Prostate gland (tissue), 2 donors: ENCODE measurements at regions of chr10 and their contacts with region 1.

Region 1: GRCh38 chr10:102583435-102584417 is 60.6 kb upstream of the TRIM8 start:
- DNase-seq: peak; percentile 82
- H3K4me3 ChIP-seq: no peak overlapping the region
- H3K27ac ChIP-seq: no peak overlapping the region
- H3K4me1 ChIP-seq: peaks cover 10% of the 10 kb centered on the region
- H3K27me3 ChIP-seq: no peaks in the 10 kb centered on the region
- CTCF ChIP-seq: peak; percentile 59 to 88 (median 84)
- POLR2A ChIP-seq: no peak

Region 2: DNA sequence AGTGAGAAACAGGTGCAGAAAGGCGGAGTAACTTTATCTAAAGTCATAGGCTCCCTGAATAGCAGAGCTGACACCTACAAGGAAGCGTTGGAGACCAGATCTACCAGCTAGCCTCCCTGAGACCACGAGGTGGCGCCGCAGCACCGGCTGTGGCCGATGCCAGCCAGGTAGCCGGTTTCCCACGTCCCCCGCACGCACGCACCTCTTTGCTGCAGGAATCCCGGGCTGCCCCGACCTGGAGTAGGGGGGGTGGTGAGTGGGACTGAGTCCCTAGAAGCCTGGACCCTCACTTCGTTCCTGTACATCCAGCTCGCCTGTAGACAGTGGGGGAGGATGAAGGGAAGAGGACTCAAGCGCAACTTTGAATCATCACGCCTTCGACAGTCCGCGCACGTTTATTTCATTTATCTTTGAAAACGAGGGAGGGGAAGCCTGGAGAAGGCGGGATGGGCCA is 353.9 kb before region 1 on chr10:
- intact Hi-C with region 1: loop called (anchors 10 kb)
- DNase-seq: peak; percentile 84
- H3K4me3 ChIP-seq: peak overlapping the region; percentile 27 to 40
- H3K27ac ChIP-seq: no peak overlapping the region
- H3K4me1 ChIP-seq: no peaks in the 10 kb centered on the region
- H3K27me3 ChIP-seq: no peaks in the 10 kb centered on the region
- CTCF ChIP-seq: peak; percentile 84 to 95 (median 92)
- POLR2A ChIP-seq: no peak